ENCODE measurements at regions of chrX and their contacts with region 1.

Region 1: GRCh38 chrX:53677286-53677685 is 9.2 kb downstream of the HUWE1 start:
- DNase-seq: no peak
- ATAC-seq: no peak
- H3K4me3 ChIP-seq: no peak overlapping the region
- H3K27ac ChIP-seq: no peak overlapping the region
- H3K4me1 ChIP-seq: peaks cover 5% of the 10 kb centered on the region
- H3K27me3 ChIP-seq: no peaks in the 10 kb centered on the region
- CTCF ChIP-seq: no peak

Region 2: GRCh38 chrX:53526999-53527398 is 150.3 kb before region 1 on chrX:
- CTCF ChIA-PET with region 1: no interaction called
- POLR2A ChIA-PET with region 1: no interaction called
- in situ Hi-C with region 1: no loop called
- intact Hi-C with region 1: no loop called
- DNase-seq: no peak
- ATAC-seq: no peak
- H3K4me3 ChIP-seq: no peak overlapping the region
- H3K27ac ChIP-seq: no peak overlapping the region
- H3K4me1 ChIP-seq: no peaks in the 10 kb centered on the region
- H3K27me3 ChIP-seq: no peaks in the 10 kb centered on the region
- CTCF ChIP-seq: no peak

Region 3: GRCh38 chrX:53695946-53696549 is 18.8 kb after region 1 on chrX:
- CTCF ChIA-PET with region 1: no interaction called
- POLR2A ChIA-PET with region 1: no interaction called
- in situ Hi-C with region 1: no loop called
- intact Hi-C with region 1: no loop called
- DNase-seq: no peak
- ATAC-seq: no peak
- H3K4me3 ChIP-seq: no peak overlapping the region
- H3K27ac ChIP-seq: no peak overlapping the region
- H3K4me1 ChIP-seq: no peaks in the 10 kb centered on the region
- H3K27me3 ChIP-seq: no peaks in the 10 kb centered on the region
- CTCF ChIP-seq: no peak

Region 4: GRCh38 chrX:53760095-53760494 is 82.8 kb after region 1 on chrX:
- CTCF ChIA-PET with region 1: no interaction called
- POLR2A ChIA-PET with region 1: no interaction called
- in situ Hi-C with region 1: no loop called
- intact Hi-C with region 1: no loop called
- DNase-seq: no peak
- ATAC-seq: no peak
- H3K4me3 ChIP-seq: no peak overlapping the region
- H3K27ac ChIP-seq: no peak overlapping the region
- H3K4me1 ChIP-seq: no peaks in the 10 kb centered on the region
- H3K27me3 ChIP-seq: no peaks in the 10 kb centered on the region
- CTCF ChIP-seq: no peak

Region 5: DNA sequence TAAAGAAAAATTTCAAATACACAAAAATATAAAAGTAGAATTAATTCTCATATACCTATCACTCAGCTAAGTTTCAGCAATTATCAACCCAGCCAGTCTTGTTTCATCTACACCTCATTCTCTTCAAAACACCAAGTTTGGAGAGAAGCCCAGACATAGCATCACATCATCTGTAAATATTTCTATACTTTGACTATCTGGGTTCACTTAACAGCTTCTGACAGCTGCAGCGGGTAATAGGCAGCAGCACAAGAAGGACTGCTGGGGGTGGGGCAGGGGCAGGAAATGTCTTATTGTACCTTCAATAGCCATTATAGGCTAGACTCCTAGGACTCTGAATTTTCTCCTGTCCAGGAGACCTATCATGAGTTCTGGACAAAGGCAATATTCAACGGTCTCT is 312.9 kb after region 1 on chrX:
- CTCF ChIA-PET with region 1: no interaction called
- POLR2A ChIA-PET with region 1: interaction called, 10 read pairs
- in situ Hi-C with region 1: no loop called
- intact Hi-C with region 1: no loop called
- DNase-seq: no peak
- ATAC-seq: no peak
- H3K4me3 ChIP-seq: no peak overlapping the region
- H3K27ac ChIP-seq: no peak overlapping the region
- H3K4me1 ChIP-seq: no peaks in the 10 kb centered on the region
- H3K27me3 ChIP-seq: no peaks in the 10 kb centered on the region
- CTCF ChIP-seq: no peak